ENCODE measurements at regions of chr9 and their contacts with region 1.

Region 1: GRCh38 chr9:96418074-96418809 is at the start of gene ZNF367:
- DNase-seq: peak; percentile 57
- ATAC-seq: peak; percentile 85
- H3K4me3 ChIP-seq: peak within 1 kb of the TSS; percentile 82 to 84
- H3K27ac ChIP-seq: peak within 1 kb of the TSS; percentile 99
- H3K4me1 ChIP-seq: peaks cover 25% of the 10 kb centered on the region
- H3K27me3 ChIP-seq: no peaks in the 10 kb centered on the region
- CTCF ChIP-seq: no peak
- total RNA-seq, gene ZNF367: 12.4 TPM

Region 2: DNA sequence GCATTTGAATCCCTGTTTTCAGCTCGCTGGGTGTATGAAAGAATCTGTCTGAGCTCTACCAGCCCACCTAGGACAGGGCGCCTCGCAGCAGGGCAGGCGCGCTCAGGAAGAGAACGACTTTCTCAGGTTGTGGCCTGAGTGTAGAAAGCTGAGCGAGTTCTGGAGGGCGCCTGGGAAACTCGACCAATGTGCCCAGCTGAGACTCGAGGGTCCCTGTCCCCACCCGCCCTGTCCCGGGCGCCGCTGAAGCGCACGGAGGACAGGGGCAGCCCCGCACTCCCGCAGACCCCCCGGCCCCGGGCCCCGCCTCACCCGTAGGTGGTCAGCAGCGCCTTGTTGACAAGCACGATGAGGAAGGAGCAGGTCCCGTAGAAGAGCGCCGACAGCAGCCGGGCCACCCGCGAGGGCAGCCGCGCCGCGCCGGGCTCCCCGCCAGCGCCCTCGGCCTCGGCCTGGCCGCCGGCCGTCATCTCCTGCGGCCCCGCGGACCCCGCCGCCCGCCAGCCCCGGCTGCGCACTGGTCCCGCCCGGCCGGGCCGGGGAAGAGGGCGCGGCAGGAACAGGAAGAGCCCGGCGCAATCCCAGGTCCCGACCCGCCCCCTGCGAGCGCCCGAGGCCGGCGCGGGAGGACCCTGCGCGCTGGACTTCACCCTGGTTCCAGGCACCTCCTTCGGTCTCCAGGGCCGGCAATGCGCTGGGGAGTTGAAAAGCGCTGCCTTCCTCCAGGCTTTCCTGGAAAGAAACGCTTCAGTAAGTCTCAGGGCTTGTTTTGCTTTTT is 34.9 kb before region 1 on chr9 and contains the start of gene SLC35D2:
- CTCF ChIA-PET with region 1: no interaction called
- POLR2A ChIA-PET with region 1: interaction called, 10 read pairs
- in situ Hi-C with region 1: no loop called
- intact Hi-C with region 1: no loop called
- DNase-seq: no peak
- ATAC-seq: peak; percentile 97
- H3K4me3 ChIP-seq: peak within 1 kb of the TSS; percentile 59 to 76
- H3K27ac ChIP-seq: peak within 1 kb of the TSS; percentile 97
- H3K4me1 ChIP-seq: peaks cover 14% of the 10 kb centered on the region
- H3K27me3 ChIP-seq: no peaks in the 10 kb centered on the region
- CTCF ChIP-seq: no peak
- total RNA-seq, gene SLC35D2: 23.7 TPM

Measured in Panc1 (cell line).